Tibial artery (tissue), 4 donors: ENCODE measurements at regions of chr16 and their contacts with region 1.

Region 1: GRCh38 chr16:23840310-23840709 is 4.5 kb downstream of the PRKCB start:
- DNase-seq: no peak
- H3K4me3 ChIP-seq: no peak overlapping the region
- H3K27ac ChIP-seq: no peak overlapping the region
- H3K4me1 ChIP-seq: peaks cover 0 to 23% (median 8%) of the 10 kb centered on the region in 4 donors
- H3K27me3 ChIP-seq: peaks cover 0 to 22% of the 10 kb centered on the region in 2 donors
- CTCF ChIP-seq: no peak

Region 2: GRCh38 chr16:23700509-23700908 is 139.8 kb before region 1 on chr16:
- intact Hi-C with region 1: no loop called
- DNase-seq: no peak
- H3K4me3 ChIP-seq: no peak overlapping the region
- H3K27ac ChIP-seq: no peak overlapping the region
- H3K4me1 ChIP-seq: no peaks in the 10 kb centered on the region
- H3K27me3 ChIP-seq: peaks cover 0 to 6% of the 10 kb centered on the region in 2 donors
- CTCF ChIP-seq: no peak

Region 3: DNA sequence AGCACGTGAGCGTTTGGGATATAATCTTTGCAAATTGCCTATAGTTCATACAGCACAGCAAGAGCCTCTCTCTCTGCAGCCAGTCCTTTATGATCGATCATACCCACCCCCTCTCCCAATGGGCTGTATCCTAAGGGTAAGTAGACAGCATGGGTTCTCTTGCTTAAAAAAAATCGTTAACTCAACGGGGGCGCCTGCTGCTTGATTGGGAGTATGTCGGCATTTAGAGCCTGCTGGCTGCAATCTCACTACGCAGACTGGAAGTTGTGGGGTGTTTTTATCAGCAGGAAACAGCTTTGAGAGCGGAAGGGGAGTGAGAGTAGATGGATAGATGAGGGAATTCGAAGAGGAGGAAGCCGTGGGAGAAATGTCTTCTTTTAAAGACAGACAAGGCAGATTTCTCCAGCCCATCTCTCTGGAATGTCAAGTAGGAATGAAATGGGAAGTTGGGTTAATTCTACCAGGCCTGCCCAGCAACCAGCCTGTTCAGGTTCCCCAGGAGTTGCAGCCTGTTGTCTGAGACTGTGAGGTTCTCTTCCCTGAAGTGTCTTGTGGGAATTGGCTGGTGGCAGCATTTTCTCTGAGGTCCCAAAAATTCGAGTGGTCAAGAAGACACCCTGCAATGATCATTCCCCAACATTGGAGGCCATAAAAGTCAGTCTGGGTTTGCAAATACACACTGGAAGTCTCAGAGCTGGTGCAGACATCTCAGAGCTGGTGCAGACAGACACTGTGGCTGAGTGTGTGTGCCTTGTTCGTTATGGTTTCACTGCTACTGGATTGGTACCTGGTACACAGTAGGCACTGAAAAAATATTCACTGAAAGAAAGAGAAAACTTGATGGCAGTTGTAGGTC is 61.1 kb after region 1 on chr16:
- intact Hi-C with region 1: loop called (anchors 2 kb)
- DNase-seq: no peak
- H3K4me3 ChIP-seq: no peak overlapping the region
- H3K27ac ChIP-seq: no peak overlapping the region
- H3K4me1 ChIP-seq: peaks cover 0 to 16% (median 4%) of the 10 kb centered on the region in 4 donors
- H3K27me3 ChIP-seq: no peaks in the 10 kb centered on the region
- CTCF ChIP-seq: no peak